Body of pancreas (tissue), 4 donors: ENCODE measurements at regions of chr15 and their contacts with region 1.

Region 1: DNA sequence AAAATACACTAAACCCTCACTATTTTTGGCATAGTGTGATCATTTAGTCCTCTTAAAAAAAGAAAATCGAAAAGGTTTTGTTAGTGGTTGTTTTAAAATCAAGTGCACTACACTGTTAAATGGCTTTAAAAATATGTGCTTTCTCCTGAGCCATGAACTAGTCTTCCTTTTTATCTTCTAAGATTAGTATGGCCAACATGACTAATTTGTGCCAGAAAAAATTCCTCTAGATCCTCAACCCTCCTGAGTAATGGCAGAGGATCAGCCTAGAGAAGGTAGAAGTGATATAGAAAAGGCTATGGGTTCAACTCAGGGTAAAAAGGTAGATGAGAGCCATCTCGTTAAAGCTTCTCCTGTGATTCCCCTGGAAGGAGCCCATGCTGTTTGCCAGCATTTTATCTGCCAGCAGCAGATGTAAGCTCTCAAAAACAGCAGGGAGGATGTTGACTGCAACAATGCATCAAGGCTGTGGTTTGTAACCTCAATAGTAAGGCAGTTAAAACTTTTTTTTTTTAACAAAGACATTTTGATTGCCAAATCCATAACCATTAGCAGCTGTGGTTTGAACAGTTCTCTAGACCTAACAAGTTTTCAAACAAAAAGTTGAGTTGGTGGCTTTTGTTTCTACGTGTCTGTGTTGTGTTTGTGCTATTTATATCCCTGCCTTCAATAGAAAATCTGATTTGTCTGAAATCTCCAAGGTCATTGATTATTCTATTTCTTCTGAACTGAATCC is 30.2 kb upstream of the ZNF609 start:
- DNase-seq: peak in 2 of 4 donors; percentile 12 to 23
- ATAC-seq: no peak
- H3K4me3 ChIP-seq: no peak overlapping the region
- H3K27ac ChIP-seq: no peak overlapping the region
- H3K4me1 ChIP-seq: no peaks in the 10 kb centered on the region
- H3K27me3 ChIP-seq: no peaks in the 10 kb centered on the region
- CTCF ChIP-seq: no peak
- POLR2A ChIP-seq: no peak

Region 2: DNA sequence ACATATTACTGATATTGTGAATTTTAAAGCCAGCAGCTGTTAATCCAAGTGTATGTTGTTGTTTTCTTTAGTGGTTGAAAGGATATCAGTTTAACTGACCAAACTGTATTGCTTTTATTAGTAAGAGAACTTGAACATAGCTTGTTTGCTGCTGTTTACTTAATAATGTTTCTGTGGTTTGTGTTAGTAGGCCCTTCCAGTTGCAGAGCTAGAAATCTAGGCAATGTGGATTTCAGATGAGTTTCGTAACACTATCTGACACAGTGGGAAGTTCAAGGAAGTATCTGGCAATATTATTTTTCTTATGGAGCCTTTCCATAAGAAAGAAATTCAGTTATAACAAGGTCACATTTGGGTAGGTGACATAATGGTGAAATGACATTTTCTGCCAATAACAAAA is 48.7 kb after region 1 on chr15:
- intact Hi-C with region 1: no loop called
- DNase-seq: no peak
- ATAC-seq: no peak
- H3K4me3 ChIP-seq: no peak overlapping the region
- H3K27ac ChIP-seq: no peak overlapping the region
- H3K4me1 ChIP-seq: peaks cover 32% of the 10 kb centered on the region
- H3K27me3 ChIP-seq: no peaks in the 10 kb centered on the region
- CTCF ChIP-seq: no peak
- POLR2A ChIP-seq: no peak

Region 3: DNA sequence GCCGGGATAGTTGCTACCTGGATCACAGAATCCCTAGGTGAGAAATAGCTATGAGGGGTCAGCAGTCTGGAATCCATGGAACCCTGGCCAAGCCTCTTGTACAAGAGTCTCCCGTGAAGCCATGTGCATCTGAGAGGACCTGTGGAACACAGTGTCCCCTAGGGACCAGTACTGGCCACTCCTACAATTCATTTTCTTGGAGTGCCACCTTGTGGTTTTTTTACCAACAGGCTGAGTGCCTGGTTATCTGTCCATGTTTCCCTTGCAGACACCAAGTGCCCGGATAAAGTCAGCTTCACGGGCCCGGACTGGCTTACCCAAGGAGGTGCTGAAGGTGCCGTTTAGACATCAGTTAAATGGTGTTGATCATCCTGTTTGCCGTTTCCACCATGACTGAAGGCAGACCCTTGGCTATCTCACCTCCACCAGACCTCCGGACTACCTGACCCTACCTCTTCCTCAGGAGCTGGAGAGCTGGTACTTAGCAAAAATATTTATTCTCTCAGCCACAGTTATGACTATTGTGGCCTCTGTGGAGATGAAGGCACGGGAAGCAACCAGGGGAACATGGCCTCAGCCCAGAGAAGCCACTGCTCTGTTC is 251.4 kb after region 1 on chr15:
- intact Hi-C with region 1: loop called (anchors 10 kb)
- DNase-seq: peak; percentile 57 to 76 (median 62)
- ATAC-seq: peak; percentile 88
- H3K4me3 ChIP-seq: no peak overlapping the region
- H3K27ac ChIP-seq: no peak overlapping the region
- H3K4me1 ChIP-seq: no peaks in the 10 kb centered on the region
- H3K27me3 ChIP-seq: no peaks in the 10 kb centered on the region
- CTCF ChIP-seq: peak; percentile 65 to 98 (median 92)
- POLR2A ChIP-seq: no peak